ENCODE measurements at regions of chr11 and their contacts with region 1.

Region 1: GRCh38 chr11:115751243-115752015 is 247.2 kb upstream of the CADM1 start:
- DNase-seq: no peak
- ATAC-seq: no peak
- H3K4me3 ChIP-seq: no peak overlapping the region
- H3K27ac ChIP-seq: no peak overlapping the region
- H3K4me1 ChIP-seq: no peaks in the 10 kb centered on the region
- H3K27me3 ChIP-seq: peaks cover 0 to 3% (median 2%) of the 10 kb centered on the region in 3 donors
- CTCF ChIP-seq: no peak

Region 2: DNA sequence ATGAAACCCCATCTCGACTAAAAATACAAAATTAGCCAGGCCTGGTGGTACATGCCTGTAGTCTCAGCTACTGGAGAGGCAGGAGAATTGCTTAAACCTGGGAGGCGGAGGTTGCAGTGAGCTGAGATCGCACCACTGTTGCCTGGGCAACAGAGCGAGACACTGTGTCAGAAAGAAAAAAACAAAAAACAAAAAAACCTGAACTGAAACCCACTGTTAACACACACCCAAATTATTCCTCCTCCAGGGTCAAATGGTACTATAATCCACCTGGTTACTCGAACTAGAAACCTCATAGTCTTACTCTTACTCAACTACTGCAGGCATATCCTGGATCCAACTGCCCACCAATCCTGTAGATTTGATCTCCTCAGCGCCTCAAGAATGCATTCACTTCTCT is 1911.6 kb before region 1 on chr11:
- intact Hi-C with region 1: loop called in 1 of 2 experiments (anchors 5 kb)
- DNase-seq: no peak
- ATAC-seq: peak in 1 of 4 donors; percentile 21
- H3K4me3 ChIP-seq: no peak overlapping the region
- H3K27ac ChIP-seq: no peak overlapping the region
- H3K4me1 ChIP-seq: no peaks in the 10 kb centered on the region
- H3K27me3 ChIP-seq: no peaks in the 10 kb centered on the region
- CTCF ChIP-seq: no peak